Activated T-helper 1 cell treated with anti-CD3 and anti-CD28 coated beads, Interleukin-12 subunit alpha, Interleukin-12 subunit beta, Interleukin-2, Interleukin-4 antibody, amounts not matched to agents 30 ng/mL and 10 ng/mL and 1 ng/mL, durations not matched to agents 14 hours and 24 hours and 36 hours (primary cell): ENCODE measurements at regions of chr12 and their contacts with region 1.

Region 1: DNA sequence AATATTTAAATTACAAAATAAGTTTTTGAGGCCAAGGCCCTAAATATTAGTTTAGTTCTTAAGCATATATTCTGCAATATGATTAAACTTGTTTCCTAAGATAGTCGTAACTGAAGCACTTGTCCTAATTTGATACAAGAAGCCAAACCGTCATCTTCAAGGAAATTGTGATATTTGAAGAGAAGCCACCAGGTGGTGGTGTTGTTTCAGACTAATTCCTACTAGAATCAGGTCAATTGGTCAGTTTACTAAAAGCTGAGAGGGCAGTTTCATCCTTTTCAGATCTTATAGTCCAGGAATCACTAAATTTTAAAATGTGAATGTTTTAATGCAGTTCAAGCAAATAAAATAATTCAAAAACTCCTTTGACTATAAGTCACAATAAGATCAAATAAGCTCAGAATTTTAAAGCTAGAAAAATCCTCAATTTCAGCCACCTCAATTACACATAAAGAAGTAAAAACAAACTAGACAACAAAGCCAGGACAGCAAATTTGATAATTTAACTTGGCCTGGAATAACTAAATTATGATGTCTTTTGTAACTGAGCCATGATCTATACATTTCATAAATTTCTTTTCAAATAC is 7.1 kb upstream of the ARL1 start:
- DNase-seq: no peak
- H3K4me3 Mint-ChIP-seq: no peak overlapping the region
- H3K27ac Mint-ChIP-seq: no peak overlapping the region
- H3K4me1 Mint-ChIP-seq: no peaks in the 10 kb centered on the region
- H3K27me3 Mint-ChIP-seq: peaks cover 21% of the 10 kb centered on the region

Region 2: GRCh38 chr12:101759396-101760047 is 344.9 kb after region 1 on chr12:
- intact Hi-C with region 1: loop called (anchors 1 kb)
- DNase-seq: no peak
- H3K4me3 Mint-ChIP-seq: no peak overlapping the region
- H3K27ac Mint-ChIP-seq: no peak overlapping the region
- H3K4me1 Mint-ChIP-seq: no peaks in the 10 kb centered on the region
- H3K27me3 Mint-ChIP-seq: no peaks in the 10 kb centered on the region

Region 3: GRCh38 chr12:101773650-101774162 is 359.1 kb after region 1 on chr12:
- intact Hi-C with region 1: loop called (anchors 2 kb)
- DNase-seq: peak; percentile 47
- H3K4me3 Mint-ChIP-seq: no peak overlapping the region
- H3K27ac Mint-ChIP-seq: peak overlapping the region; percentile 42
- H3K4me1 Mint-ChIP-seq: peaks cover 41% of the 10 kb centered on the region
- H3K27me3 Mint-ChIP-seq: no peaks in the 10 kb centered on the region

Region 4: GRCh38 chr12:101839324-101840283 is 425.0 kb after region 1 on chr12:
- intact Hi-C with region 1: loop called (anchors 1 kb)
- DNase-seq: peak; percentile 51
- H3K4me3 Mint-ChIP-seq: no peak overlapping the region
- H3K27ac Mint-ChIP-seq: peak overlapping the region; percentile 71
- H3K4me1 Mint-ChIP-seq: peaks cover 8% of the 10 kb centered on the region
- H3K27me3 Mint-ChIP-seq: peaks cover 4% of the 10 kb centered on the region